Activated naive CD4-positive, alpha-beta T cell treated with anti-CD3 and anti-CD28 coated beads, Interleukin-2, amount 10 ng/mL, durations not matched to agents 7 days and 5 days (primary cell): ENCODE measurements at regions of chr11 and their contacts with region 1.

Region 1: DNA sequence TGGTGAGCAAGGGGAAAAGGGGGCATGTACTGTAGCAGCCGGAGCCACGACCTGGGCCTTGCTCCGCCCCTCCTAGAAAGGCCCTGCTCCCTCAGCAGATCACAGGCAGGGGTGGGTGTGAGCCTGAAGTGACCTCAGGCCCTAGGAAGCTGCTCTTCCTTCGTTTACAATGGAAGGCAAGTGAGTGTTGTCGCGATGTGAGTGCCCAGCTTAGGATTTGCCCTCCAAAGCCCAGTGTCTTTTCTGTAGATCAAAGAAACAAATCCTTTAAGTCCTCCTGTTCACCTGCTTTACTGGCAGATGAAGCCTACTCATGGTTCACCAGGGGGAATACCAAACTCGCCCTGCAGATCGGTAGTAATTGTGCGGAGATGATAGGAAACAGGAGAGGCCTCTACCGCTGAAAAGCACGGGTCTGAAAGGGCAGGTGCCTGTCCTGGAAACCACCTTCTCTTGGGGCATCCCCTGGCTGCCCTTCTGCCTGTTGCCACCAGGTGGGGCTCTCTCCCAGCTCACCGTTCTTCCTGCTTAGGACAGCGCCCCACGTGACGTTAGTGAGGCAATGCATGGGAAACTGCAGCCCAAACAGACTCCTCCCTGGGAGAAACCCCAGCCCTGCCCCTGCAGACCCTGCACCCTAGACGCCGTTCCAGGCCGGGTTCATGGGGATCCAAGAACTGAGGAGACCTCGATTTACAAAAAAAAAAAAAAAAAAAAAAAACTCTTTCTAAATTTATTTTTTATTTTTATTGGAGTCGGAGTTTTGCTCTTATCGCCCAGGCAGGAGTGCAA is 45.9 kb upstream of the RAB1B start:
- DNase-seq: peak; percentile 95
- H3K4me3 Mint-ChIP-seq: no peak overlapping the region
- H3K27ac Mint-ChIP-seq: peak overlapping the region; percentile 84
- H3K4me1 Mint-ChIP-seq: peaks cover 22% of the 10 kb centered on the region
- H3K27me3 Mint-ChIP-seq: no peaks in the 10 kb centered on the region

Region 2: DNA sequence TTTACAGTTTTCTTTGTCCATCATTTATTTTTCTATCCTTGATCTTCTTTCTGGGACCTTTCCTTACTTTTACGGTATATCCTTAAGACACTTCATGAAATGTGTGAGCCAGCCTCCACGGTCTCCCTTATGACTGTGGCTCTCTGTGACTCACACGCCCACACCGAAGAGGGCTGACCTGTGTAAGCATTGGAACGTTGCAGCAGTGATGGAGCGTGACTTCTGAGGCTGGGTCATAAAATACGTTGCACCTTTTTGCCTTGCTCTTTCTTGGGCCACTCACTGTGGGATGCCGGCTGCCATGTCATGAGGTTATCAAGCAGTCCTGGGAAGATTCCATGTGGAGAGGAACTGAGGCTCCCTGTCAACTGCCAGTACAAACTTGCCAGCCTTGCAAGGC is 50.4 kb before region 1 on chr11:
- CTCF ChIA-PET with region 1: no interaction called
- DNase-seq: no peak
- H3K4me3 Mint-ChIP-seq: no peak overlapping the region
- H3K27ac Mint-ChIP-seq: no peak overlapping the region
- H3K4me1 Mint-ChIP-seq: peaks cover 4% of the 10 kb centered on the region
- H3K27me3 Mint-ChIP-seq: no peaks in the 10 kb centered on the region

Region 3: GRCh38 chr11:66258473-66258893 is 35.9 kb after region 1 on chr11:
- CTCF ChIA-PET with region 1: interaction called, 23 read pairs
- DNase-seq: no peak
- H3K4me3 Mint-ChIP-seq: peak overlapping the region; percentile 85
- H3K27ac Mint-ChIP-seq: peak overlapping the region; percentile 99
- H3K4me1 Mint-ChIP-seq: peaks cover 34% of the 10 kb centered on the region
- H3K27me3 Mint-ChIP-seq: peaks cover 3% of the 10 kb centered on the region

Region 4: GRCh38 chr11:66282468-66283386 is 60.2 kb after region 1 on chr11:
- CTCF ChIA-PET with region 1: interaction called, 15 read pairs
- DNase-seq: peak; percentile 100
- H3K4me3 Mint-ChIP-seq: peak overlapping the region; percentile 18
- H3K27ac Mint-ChIP-seq: peak overlapping the region; percentile 58
- H3K4me1 Mint-ChIP-seq: peaks cover 49% of the 10 kb centered on the region
- H3K27me3 Mint-ChIP-seq: peaks cover 36% of the 10 kb centered on the region